Naive thymus-derived CD4-positive, alpha-beta T cell (primary cell): ENCODE measurements at regions of chr2 and their contacts with region 1.

Region 1: DNA sequence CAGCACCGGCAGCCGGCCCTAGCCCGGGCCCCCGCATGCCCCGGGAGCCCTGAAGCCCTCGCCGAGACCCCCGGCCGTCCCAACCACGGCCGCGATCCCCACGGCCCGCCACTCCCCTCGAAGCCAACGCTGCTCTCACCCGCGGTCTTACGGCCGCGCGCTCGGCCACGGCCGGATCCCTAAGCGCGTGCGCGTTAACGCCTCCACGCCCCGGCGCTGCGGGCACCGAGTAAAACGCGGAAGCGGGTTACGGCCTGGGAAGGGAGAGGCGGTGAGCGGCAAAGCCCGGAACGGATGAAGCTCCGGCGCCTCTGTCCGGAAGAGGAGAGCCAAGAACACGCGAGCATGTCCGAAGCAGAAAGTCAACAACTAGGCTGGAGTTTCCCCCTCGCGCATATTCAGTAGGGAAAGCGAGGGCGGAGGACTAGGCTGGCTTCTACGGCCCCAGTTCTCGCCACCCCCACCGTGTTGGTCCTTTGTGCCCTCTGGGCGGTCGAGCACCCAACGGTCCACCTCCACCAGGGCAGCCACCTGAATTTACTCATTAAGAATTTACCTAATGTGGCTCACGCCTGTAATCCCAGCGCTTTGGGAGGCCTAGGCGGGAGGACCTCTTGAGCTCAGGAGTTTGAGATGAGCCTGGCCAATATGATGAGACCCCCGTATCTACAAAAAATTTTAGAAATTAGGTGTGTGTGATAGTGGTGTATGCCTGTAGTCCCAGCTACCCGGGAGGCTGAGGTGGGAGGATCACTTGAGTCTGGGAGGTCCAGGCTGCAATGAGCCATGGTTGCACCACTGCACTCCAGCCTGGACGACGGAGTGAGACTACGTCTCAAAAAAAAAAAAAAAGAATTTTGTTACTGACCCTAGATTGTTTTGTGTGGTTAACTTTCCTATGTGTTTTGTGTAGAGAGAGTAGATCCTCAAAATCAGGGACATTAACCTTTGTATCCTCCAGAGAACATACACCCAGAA is at the start of gene KANSL3:
- DNase-seq: peak; percentile 81 to 96 (median 88)
- ATAC-seq: peak; percentile 93
- H3K4me3 ChIP-seq: peak within 1 kb of the TSS; percentile 97
- H3K4me3 Mint-ChIP-seq: peak within 1 kb of the TSS; percentile 89 to 96 (median 93)
- H3K27ac ChIP-seq: peak within 1 kb of the TSS; percentile 90
- H3K27ac Mint-ChIP-seq: peak within 1 kb of the TSS; percentile 87 to 95 (median 92)
- H3K4me1 ChIP-seq: peaks cover 18% of the 10 kb centered on the region in 2 donors
- H3K4me1 Mint-ChIP-seq: peaks cover 28 to 46% (median 39%) of the 10 kb centered on the region in 7 donors
- H3K27me3 ChIP-seq: no peaks in the 10 kb centered on the region
- H3K27me3 Mint-ChIP-seq: peaks cover 0 to 10% (median 0%) of the 10 kb centered on the region in 5 donors
- total RNA-seq, gene KANSL3: 54.0 to 65.0 (median 55.9) TPM

Region 2: GRCh38 chr2:96208143-96209010 is 430.1 kb before region 1 on chr2 and contains the start of gene STARD7:
- CTCF ChIA-PET with region 1: no interaction called
- POLR2A ChIA-PET with region 1: no interaction called
- intact Hi-C with region 1: loop called in 1 of 2 experiments (anchors 10 kb)
- DNase-seq: peak; percentile 93 to 97 (median 95)
- ATAC-seq: peak; percentile 92
- H3K4me3 ChIP-seq: peak within 1 kb of the TSS; percentile 83
- H3K4me3 Mint-ChIP-seq: peak within 1 kb of the TSS; percentile 88 to 100 (median 95)
- H3K27ac ChIP-seq: peak within 1 kb of the TSS; percentile 87
- H3K27ac Mint-ChIP-seq: peak within 1 kb of the TSS; percentile 86 to 99 (median 93)
- H3K4me1 ChIP-seq: peaks cover 30 to 37% of the 10 kb centered on the region in 2 donors
- H3K4me1 Mint-ChIP-seq: peaks cover 37 to 57% (median 51%) of the 10 kb centered on the region in 7 donors
- H3K27me3 ChIP-seq: no peaks in the 10 kb centered on the region
- H3K27me3 Mint-ChIP-seq: no peaks in the 10 kb centered on the region
- total RNA-seq, gene STARD7: 56.5 to 133 (median 74.2) TPM

Region 3: DNA sequence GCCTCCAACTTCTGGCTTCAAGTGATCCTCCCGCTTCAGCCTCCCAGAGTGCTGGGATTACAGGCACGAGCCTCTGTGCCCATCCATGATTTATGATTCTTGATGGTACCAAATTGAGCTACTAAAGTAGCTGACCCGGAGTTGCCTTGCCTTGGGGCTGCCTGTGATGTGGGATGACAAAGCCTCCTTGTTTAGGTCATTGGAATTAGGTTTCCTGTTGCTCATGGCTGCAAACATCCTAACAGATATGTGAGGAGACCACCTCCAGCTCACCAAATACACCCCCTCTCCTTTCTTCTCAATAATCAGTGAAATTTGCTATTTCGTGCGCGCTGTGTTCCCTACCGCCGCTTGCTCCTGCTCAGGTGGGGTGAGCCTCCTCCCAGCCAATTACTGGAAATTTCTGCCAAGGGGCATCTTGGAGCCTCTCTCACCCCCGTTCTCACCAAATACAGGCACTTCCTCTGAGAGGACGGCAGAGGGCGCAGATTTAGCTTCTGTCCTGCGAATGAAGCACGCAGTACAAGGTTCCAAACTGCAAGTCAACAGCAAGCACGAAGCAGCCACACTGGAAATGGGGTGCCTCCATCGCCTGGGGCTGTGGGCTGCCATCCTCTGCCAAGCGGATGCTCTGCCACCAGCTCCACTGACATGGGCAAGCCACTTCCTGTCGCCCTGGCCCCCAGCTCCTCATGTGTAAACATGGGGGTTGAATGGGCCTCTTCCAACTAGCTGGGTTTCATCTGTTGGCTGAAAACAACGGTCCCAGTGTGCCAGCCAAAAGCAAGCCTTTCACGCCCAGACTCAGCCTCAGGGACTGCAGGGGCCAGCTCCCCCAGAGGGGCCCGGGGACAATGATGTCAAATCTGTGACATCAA is 231.2 kb before region 1 on chr2:
- CTCF ChIA-PET with region 1: interaction called, 4 read pairs
- POLR2A ChIA-PET with region 1: interaction called, 10 read pairs
- intact Hi-C with region 1: no loop called
- DNase-seq: peak; percentile 48 to 92 (median 88)
- ATAC-seq: peak; percentile 94
- H3K4me3 ChIP-seq: peak overlapping the region; percentile 49
- H3K4me3 Mint-ChIP-seq: peak overlapping the region; percentile 67 to 91 (median 83)
- H3K27ac ChIP-seq: peak overlapping the region; percentile 33
- H3K27ac Mint-ChIP-seq: peak overlapping the region; percentile 89 to 100 (median 96)
- H3K4me1 ChIP-seq: peaks cover 19 to 31% of the 10 kb centered on the region in 2 donors
- H3K4me1 Mint-ChIP-seq: peaks cover 18 to 51% (median 36%) of the 10 kb centered on the region in 7 donors
- H3K27me3 ChIP-seq: no peaks in the 10 kb centered on the region
- H3K27me3 Mint-ChIP-seq: no peaks in the 10 kb centered on the region

Region 4: DNA sequence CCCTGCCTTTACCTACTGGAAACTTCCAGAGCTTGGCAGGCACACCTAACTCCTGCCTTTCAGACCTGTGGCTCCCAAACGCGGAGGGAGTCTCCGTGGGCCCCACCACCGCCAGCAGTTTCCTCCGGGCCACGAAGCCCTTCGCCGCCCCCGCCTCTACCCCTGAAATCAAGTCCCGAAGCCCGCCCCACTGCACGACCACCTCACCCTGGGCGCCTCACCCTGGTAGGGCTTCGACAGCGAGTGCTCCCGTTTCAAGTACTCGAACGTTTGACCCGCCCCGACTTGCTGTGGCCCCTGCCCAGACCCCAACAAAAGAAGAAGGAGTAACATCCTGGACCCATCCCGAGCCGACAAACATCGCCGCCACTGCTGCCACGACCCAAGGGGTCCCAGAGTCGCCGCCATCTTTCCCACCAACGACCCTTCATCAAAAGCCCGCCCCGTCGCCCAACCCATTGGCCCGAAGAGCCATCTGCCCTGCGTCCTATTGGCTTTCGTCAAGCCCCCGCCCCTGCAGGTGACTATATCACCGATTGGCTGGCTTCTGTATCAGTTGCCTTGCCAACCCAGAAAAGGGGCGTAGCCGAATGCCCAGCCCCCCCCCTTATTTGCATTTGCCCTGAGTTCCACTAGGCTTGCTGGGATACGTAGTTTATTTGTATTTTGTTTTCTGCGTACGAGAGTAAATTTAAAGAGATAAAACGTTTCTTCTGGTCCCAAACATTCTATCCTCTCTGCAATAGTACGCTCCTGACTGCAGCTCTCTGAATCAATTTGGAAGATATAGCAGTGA is 101.4 kb after region 1 on chr2 and contains the start of gene LMAN2L:
- CTCF ChIA-PET with region 1: no interaction called
- POLR2A ChIA-PET with region 1: interaction called, 3 read pairs
- intact Hi-C with region 1: loop called (anchors 1 kb)
- DNase-seq: peak; percentile 78 to 99 (median 94)
- ATAC-seq: peak; percentile 100
- H3K4me3 ChIP-seq: peak within 1 kb of the TSS; percentile 70
- H3K4me3 Mint-ChIP-seq: peak within 1 kb of the TSS; percentile 92 to 100 (median 97)
- H3K27ac ChIP-seq: peak within 1 kb of the TSS; percentile 75
- H3K27ac Mint-ChIP-seq: peak within 1 kb of the TSS; percentile 83 to 96 (median 90)
- H3K4me1 ChIP-seq: peaks cover 6% of the 10 kb centered on the region in 2 donors
- H3K4me1 Mint-ChIP-seq: peaks cover 20 to 48% (median 37%) of the 10 kb centered on the region in 7 donors
- H3K27me3 ChIP-seq: no peaks in the 10 kb centered on the region
- H3K27me3 Mint-ChIP-seq: no peaks in the 10 kb centered on the region
- total RNA-seq, gene LMAN2L: 5.0 to 10.9 (median 9.2) TPM

Region 5: DNA sequence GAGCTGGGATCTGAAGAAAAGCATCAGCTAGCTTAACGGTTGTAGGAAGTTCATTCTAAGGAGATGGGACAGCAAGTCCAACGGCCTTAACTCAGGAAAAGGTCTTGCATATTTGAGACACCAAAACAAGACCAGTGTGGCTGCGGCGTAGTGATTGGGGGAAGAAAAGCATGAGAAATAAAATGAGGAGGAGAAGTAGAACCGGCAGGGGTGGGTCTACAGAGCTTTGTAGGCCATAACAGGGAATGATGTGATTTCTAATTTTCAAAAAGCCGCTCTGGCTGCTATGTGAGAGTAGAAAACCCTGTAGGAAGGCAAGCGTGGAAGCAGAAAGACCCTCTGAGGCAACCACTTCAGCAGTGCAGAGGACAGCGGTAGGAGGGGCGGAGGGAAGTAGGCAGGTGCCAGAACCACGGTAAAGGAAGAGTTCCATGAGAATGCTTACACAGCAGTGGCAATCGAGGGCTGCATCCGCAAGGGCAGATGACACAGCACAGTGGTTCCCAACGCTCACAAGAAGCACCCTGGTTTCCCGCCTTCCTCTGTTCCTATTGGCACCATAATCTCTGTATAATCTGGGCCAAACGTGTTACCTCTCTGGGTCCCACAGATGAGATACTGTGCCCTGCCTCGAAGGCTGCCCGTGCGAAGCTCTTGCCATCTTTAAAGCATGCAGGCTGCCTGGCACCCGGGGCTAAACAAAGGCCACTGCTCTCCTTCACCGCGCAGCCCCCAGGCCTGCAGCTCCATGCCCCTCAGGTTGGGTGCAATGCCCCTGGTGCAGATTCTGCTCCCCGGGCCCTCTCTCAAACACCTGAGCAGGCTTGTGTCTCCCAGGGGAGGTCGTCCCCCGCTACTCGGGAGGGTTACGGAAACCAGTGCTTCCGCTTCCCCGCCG is 218.6 kb after region 1 on chr2:
- CTCF ChIA-PET with region 1: no interaction called
- POLR2A ChIA-PET with region 1: no interaction called
- intact Hi-C with region 1: loop called in 1 of 2 experiments (anchors 1 kb)
- DNase-seq: peak in 5 of 9 donors; percentile 27 to 39 (median 35)
- ATAC-seq: no peak
- H3K4me3 ChIP-seq: peak overlapping the region; percentile 72
- H3K4me3 Mint-ChIP-seq: peak overlapping the region; percentile 85 to 93 (median 89)
- H3K27ac ChIP-seq: peak overlapping the region; percentile 79
- H3K27ac Mint-ChIP-seq: peak overlapping the region; percentile 38 to 92 (median 84)
- H3K4me1 ChIP-seq: peaks cover 14 to 16% of the 10 kb centered on the region in 2 donors
- H3K4me1 Mint-ChIP-seq: peaks cover 21 to 57% (median 43%) of the 10 kb centered on the region in 7 donors
- H3K27me3 ChIP-seq: no peaks in the 10 kb centered on the region
- H3K27me3 Mint-ChIP-seq: no peaks in the 10 kb centered on the region

Region 6: DNA sequence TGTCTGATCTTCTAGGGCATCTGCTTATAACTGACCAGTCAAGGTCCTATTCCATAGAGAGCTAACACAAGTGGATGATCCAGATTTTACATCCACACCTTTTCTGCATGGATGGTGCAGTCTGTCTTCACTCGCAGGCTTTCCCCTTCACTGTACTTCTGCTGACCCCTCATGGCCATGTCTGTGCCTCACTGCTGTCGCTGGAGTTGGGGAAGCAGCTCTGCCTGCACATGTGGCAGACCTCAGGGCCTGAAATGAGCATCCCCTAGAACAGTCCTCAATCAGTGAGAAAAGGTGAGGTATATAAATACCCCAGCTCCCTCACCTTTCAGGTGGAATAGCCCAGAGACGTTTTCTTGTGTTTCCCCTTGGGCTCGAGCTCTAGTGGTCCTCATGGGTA is 717.5 kb after region 1 on chr2:
- CTCF ChIA-PET with region 1: no interaction called
- POLR2A ChIA-PET with region 1: no interaction called
- intact Hi-C with region 1: no loop called
- DNase-seq: no peak
- ATAC-seq: no peak
- H3K4me3 ChIP-seq: no peak overlapping the region
- H3K4me3 Mint-ChIP-seq: no peak overlapping the region
- H3K27ac ChIP-seq: no peak overlapping the region
- H3K27ac Mint-ChIP-seq: no peak overlapping the region
- H3K4me1 ChIP-seq: no peaks in the 10 kb centered on the region
- H3K4me1 Mint-ChIP-seq: no peaks in the 10 kb centered on the region
- H3K27me3 ChIP-seq: no peaks in the 10 kb centered on the region
- H3K27me3 Mint-ChIP-seq: peaks cover 16 to 52% (median 39%) of the 10 kb centered on the region in 5 donors

Region 7: GRCh38 chr2:98518090-98518489 is 1879.7 kb after region 1 on chr2:
- CTCF ChIA-PET with region 1: no interaction called
- POLR2A ChIA-PET with region 1: no interaction called
- intact Hi-C with region 1: loop called in 1 of 2 experiments (anchors 5 kb)
- DNase-seq: peak; percentile 37 to 75 (median 66)
- ATAC-seq: peak; percentile 89
- H3K4me3 ChIP-seq: no peak overlapping the region
- H3K4me3 Mint-ChIP-seq: peak overlapping the region in 1 of 10 donors; percentile 16
- H3K27ac ChIP-seq: peak overlapping the region; percentile 9
- H3K27ac Mint-ChIP-seq: peak overlapping the region in 7 of 9 donors; percentile 24 to 75 (median 57)
- H3K4me1 ChIP-seq: peaks cover 30 to 49% of the 10 kb centered on the region in 2 donors
- H3K4me1 Mint-ChIP-seq: peaks cover 34 to 64% (median 58%) of the 10 kb centered on the region in 7 donors
- H3K27me3 ChIP-seq: no peaks in the 10 kb centered on the region
- H3K27me3 Mint-ChIP-seq: no peaks in the 10 kb centered on the region